Left ventricle myocardium superior (tissue), 1 donor: ENCODE measurements at regions of chr5 and their contacts with region 1.

Region 1: GRCh38 chr5:63700241-63700640 is 262.0 kb downstream of the HTR1A start:
- DNase-seq: no peak
- ATAC-seq: no peak

Region 2: GRCh38 chr5:63727583-63727982 is 27.3 kb after region 1 on chr5:
- intact Hi-C with region 1: loop called (anchors 2 kb)
- DNase-seq: no peak
- ATAC-seq: no peak

Region 3: DNA sequence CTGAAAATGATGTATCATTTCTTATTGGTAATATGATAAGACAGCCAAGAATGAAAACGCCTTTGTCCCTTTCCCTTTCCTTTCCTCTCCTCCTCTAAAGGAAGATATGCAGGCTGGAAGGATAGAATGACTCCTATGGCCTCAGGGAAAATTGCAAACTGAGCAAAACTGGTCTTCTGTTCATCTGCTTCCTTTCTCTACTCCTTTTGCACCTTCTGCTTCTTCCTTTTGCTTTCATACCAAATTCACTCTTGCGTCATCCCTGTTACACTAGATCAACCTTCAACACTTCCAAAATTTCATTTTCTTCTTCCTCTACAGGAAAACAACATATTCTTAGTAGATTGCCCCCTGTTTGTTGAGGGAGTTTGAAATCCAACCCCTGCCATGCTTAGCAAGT is 1547.4 kb after region 1 on chr5:
- intact Hi-C with region 1: no loop called
- DNase-seq: no peak
- ATAC-seq: no peak